CD8-positive, alpha-beta T cell (primary cell): ENCODE measurements at regions of chr16 and their contacts with region 1.

Region 1: GRCh38 chr16:21708533-21709115 is 44.9 kb downstream of the OTOA start:
- DNase-seq: peak; percentile 76 to 90 (median 82)
- ATAC-seq: peak; percentile 84
- H3K4me3 ChIP-seq: no peak overlapping the region
- H3K4me3 Mint-ChIP-seq: no peak overlapping the region
- H3K27ac ChIP-seq: no peak overlapping the region
- H3K27ac Mint-ChIP-seq: no peak overlapping the region
- H3K4me1 ChIP-seq: peaks cover 3% of the 10 kb centered on the region
- H3K4me1 Mint-ChIP-seq: peaks cover 2% of the 10 kb centered on the region
- H3K27me3 ChIP-seq: no peaks in the 10 kb centered on the region
- H3K27me3 Mint-ChIP-seq: no peaks in the 10 kb centered on the region
- CTCF ChIP-seq: peak; percentile 74

Region 2: GRCh38 chr16:21584817-21585216 is 123.8 kb before region 1 on chr16:
- CTCF ChIA-PET with region 1: interaction called, 100 read pairs
- POLR2A ChIA-PET with region 1: interaction called, 3 read pairs
- intact Hi-C with region 1: loop called (anchors 1 kb)
- DNase-seq: no peak
- ATAC-seq: no peak
- H3K4me3 ChIP-seq: no peak overlapping the region
- H3K4me3 Mint-ChIP-seq: no peak overlapping the region
- H3K27ac ChIP-seq: no peak overlapping the region
- H3K27ac Mint-ChIP-seq: no peak overlapping the region
- H3K4me1 ChIP-seq: no peaks in the 10 kb centered on the region
- H3K4me1 Mint-ChIP-seq: peaks cover 2% of the 10 kb centered on the region
- H3K27me3 ChIP-seq: no peaks in the 10 kb centered on the region
- H3K27me3 Mint-ChIP-seq: no peaks in the 10 kb centered on the region
- CTCF ChIP-seq: no peak

Region 3: GRCh38 chr16:21638573-21638975 is 70.0 kb before region 1 on chr16:
- CTCF ChIA-PET with region 1: interaction called, 109 read pairs
- POLR2A ChIA-PET with region 1: no interaction called
- intact Hi-C with region 1: loop called in 1 of 2 experiments (anchors 1 kb)
- DNase-seq: peak in 2 of 9 experiments; percentile 27 to 53
- ATAC-seq: peak; percentile 47
- H3K4me3 ChIP-seq: no peak overlapping the region
- H3K4me3 Mint-ChIP-seq: peak overlapping the region; percentile 4
- H3K27ac ChIP-seq: peak overlapping the region; percentile 8 to 60
- H3K27ac Mint-ChIP-seq: peak overlapping the region; percentile 87
- H3K4me1 ChIP-seq: peaks cover 29% of the 10 kb centered on the region
- H3K4me1 Mint-ChIP-seq: peaks cover 31% of the 10 kb centered on the region
- H3K27me3 ChIP-seq: no peaks in the 10 kb centered on the region
- H3K27me3 Mint-ChIP-seq: no peaks in the 10 kb centered on the region
- CTCF ChIP-seq: no peak

Region 4: DNA sequence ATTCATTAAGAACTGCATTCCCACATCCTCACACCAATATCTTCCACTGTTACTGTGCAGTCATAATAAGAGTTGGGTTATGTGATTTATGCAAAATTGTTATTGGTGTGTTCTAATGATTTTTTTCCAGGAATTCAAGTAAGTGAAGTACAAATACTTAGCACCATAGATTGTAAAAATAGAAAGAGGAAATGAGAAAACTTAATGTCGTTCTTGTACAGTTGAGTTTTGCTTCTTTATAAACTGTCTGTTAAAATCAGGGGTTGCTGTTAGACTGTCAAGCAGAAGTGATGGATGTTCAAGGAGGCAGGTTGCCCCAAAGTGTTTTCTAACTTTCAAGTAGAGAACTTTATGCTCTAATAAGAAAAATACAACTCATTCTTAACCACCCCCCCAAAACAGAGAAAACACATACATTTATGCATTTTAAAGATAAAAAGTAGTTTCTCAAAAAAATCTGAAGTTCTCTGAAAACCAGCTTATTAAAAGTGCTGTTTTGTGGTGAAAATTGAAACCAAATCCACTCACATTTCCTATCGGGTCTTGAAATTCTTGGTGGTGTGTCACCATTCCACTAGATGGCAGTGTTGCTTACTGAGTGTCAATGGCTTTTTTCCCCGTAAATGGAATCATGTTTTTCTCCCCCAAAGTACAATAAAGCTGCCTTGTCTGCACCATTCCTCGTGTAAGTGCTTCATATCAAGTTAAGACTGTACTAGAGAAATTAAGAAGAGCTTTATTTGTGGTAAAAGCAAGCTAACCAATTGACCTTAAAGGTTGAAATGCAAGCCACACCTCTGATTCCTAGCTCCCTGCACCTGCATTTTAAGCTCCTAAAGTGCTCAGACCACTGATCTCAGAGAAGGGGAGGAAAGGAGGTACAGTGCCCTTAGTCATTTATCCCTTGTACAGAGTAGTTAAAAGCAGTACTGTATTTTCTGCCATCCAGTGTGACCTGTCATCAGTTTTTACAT is 51.5 kb before region 1 on chr16:
- CTCF ChIA-PET with region 1: interaction called, 168 read pairs
- POLR2A ChIA-PET with region 1: interaction called, 6 read pairs
- intact Hi-C with region 1: loop called (anchors 1 kb)
- DNase-seq: peak in 7 of 9 experiments; percentile 22 to 83 (median 43)
- ATAC-seq: peak; percentile 36
- H3K4me3 ChIP-seq: no peak overlapping the region
- H3K4me3 Mint-ChIP-seq: no peak overlapping the region
- H3K27ac ChIP-seq: no peak overlapping the region
- H3K27ac Mint-ChIP-seq: peak overlapping the region; percentile 30
- H3K4me1 ChIP-seq: peaks cover 21% of the 10 kb centered on the region
- H3K4me1 Mint-ChIP-seq: peaks cover 35% of the 10 kb centered on the region
- H3K27me3 ChIP-seq: no peaks in the 10 kb centered on the region
- H3K27me3 Mint-ChIP-seq: no peaks in the 10 kb centered on the region
- CTCF ChIP-seq: peak; percentile 93

Region 5: GRCh38 chr16:21673469-21673868 is 35.2 kb before region 1 on chr16:
- CTCF ChIA-PET with region 1: interaction called, 11 read pairs
- POLR2A ChIA-PET with region 1: no interaction called
- intact Hi-C with region 1: no loop called
- DNase-seq: no peak
- ATAC-seq: no peak
- H3K4me3 ChIP-seq: no peak overlapping the region
- H3K4me3 Mint-ChIP-seq: no peak overlapping the region
- H3K27ac ChIP-seq: no peak overlapping the region
- H3K27ac Mint-ChIP-seq: no peak overlapping the region
- H3K4me1 ChIP-seq: no peaks in the 10 kb centered on the region
- H3K4me1 Mint-ChIP-seq: no peaks in the 10 kb centered on the region
- H3K27me3 ChIP-seq: peaks cover 0 to 3% of the 10 kb centered on the region in 2 experiments
- H3K27me3 Mint-ChIP-seq: no peaks in the 10 kb centered on the region
- CTCF ChIP-seq: no peak

Region 6: GRCh38 chr16:21719283-21719682 is 10.7 kb after region 1 on chr16:
- CTCF ChIA-PET with region 1: interaction called, 18 read pairs
- POLR2A ChIA-PET with region 1: no interaction called
- intact Hi-C with region 1: no loop called
- DNase-seq: no peak
- ATAC-seq: no peak
- H3K4me3 ChIP-seq: no peak overlapping the region
- H3K4me3 Mint-ChIP-seq: no peak overlapping the region
- H3K27ac ChIP-seq: no peak overlapping the region
- H3K27ac Mint-ChIP-seq: no peak overlapping the region
- H3K4me1 ChIP-seq: no peaks in the 10 kb centered on the region
- H3K4me1 Mint-ChIP-seq: no peaks in the 10 kb centered on the region
- H3K27me3 ChIP-seq: no peaks in the 10 kb centered on the region
- H3K27me3 Mint-ChIP-seq: no peaks in the 10 kb centered on the region
- CTCF ChIP-seq: no peak

Region 7: GRCh38 chr16:22413819-22414218 is 705.2 kb after region 1 on chr16:
- CTCF ChIA-PET with region 1: no interaction called
- POLR2A ChIA-PET with region 1: no interaction called
- intact Hi-C with region 1: no loop called
- DNase-seq: no peak
- ATAC-seq: no peak
- H3K4me3 ChIP-seq: no peak overlapping the region
- H3K4me3 Mint-ChIP-seq: no peak overlapping the region
- H3K27ac ChIP-seq: no peak overlapping the region
- H3K27ac Mint-ChIP-seq: no peak overlapping the region
- H3K4me1 ChIP-seq: no peaks in the 10 kb centered on the region
- H3K4me1 Mint-ChIP-seq: no peaks in the 10 kb centered on the region
- H3K27me3 ChIP-seq: no peaks in the 10 kb centered on the region
- H3K27me3 Mint-ChIP-seq: no peaks in the 10 kb centered on the region
- CTCF ChIP-seq: no peak